HEK293T (cell line): ENCODE measurements at regions of chr16 and their contacts with region 1.

Region 1: GRCh38 chr16:11597239-11598101 is 10.8 kb upstream of the LITAF start:
- DNase-seq: no peak

Region 2: GRCh38 chr16:11586856-11587642 is 10.4 kb before region 1 on chr16 and contains the start of gene LITAF:
- CTCF ChIA-PET with region 1: interaction called, 3 read pairs
- POLR2A ChIA-PET with region 1: interaction called, 36 read pairs
- DNase-seq: peak; percentile 55